Activated CD4-positive, alpha-beta T cell treated with anti-CD3 and anti-CD28 coated beads, Interleukin-2, amount 10 ng/mL, durations not matched to agents 24 days and 14 days (primary cell): ENCODE measurements at regions of chr14 and their contacts with region 1.

Region 1: GRCh38 chr14:99230208-99231151 is 41.5 kb downstream of the BCL11B start:
- DNase-seq: peak; percentile 95
- H3K4me3 Mint-ChIP-seq: peak overlapping the region; percentile 90
- H3K27ac Mint-ChIP-seq: peak overlapping the region; percentile 98
- H3K4me1 Mint-ChIP-seq: peaks cover 89% of the 10 kb centered on the region
- H3K27me3 Mint-ChIP-seq: no peaks in the 10 kb centered on the region

Region 2: DNA sequence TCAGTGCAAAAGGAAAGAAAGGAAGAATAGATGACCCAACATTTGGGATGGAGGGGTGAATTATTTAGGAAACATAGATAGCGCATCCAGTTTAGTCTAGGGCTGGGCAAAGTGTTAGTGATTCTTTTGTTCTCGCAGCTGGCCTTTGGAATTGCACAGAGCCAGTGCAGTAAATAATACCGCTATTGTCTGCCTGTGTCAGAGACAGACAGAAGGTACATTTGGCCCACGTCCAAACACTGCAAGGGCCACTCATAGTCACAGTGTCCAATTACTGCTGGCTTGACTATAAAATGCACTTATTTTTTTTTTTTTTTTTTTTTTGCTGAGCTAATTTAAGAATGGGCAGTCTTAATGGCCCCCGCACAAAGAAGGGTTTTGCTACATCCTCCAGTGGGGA is 597.1 kb before region 1 on chr14:
- intact Hi-C with region 1: no loop called
- DNase-seq: peak; percentile 30
- H3K4me3 Mint-ChIP-seq: no peak overlapping the region
- H3K27ac Mint-ChIP-seq: no peak overlapping the region
- H3K4me1 Mint-ChIP-seq: no peaks in the 10 kb centered on the region
- H3K27me3 Mint-ChIP-seq: no peaks in the 10 kb centered on the region

Region 3: DNA sequence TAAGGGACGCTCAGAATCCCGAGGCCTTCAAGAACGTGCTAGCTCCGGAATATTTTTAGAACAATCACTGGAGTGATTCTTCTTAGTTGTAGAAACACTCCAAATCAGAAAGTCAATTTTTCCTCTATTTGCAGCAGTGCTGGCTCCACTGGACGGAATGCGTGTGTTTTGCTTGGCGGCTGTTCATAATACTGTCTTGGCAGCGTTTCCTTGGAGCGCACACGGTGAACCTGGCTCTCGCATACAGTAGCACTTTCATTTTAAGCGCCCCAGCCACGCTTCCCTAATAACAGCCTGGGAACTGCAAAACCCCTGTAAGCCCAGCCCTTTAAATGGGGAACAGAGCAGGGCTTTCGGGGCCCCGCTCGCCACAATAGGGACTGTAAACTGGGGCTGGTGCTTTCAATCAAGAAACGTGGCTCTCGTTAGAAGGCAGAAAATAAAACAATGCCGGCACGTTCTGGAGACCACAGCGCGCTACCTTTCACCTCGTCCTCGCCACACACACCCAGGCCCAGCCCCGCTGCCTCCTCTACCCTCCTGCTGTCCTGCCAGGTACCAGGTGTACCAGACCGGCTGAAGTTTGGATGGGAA is 38.4 kb before region 1 on chr14:
- intact Hi-C with region 1: loop called (anchors 2 kb)
- DNase-seq: peak; percentile 80
- H3K4me3 Mint-ChIP-seq: peak overlapping the region; percentile 90
- H3K27ac Mint-ChIP-seq: peak overlapping the region; percentile 89
- H3K4me1 Mint-ChIP-seq: peaks cover 89% of the 10 kb centered on the region
- H3K27me3 Mint-ChIP-seq: no peaks in the 10 kb centered on the region

Region 4: DNA sequence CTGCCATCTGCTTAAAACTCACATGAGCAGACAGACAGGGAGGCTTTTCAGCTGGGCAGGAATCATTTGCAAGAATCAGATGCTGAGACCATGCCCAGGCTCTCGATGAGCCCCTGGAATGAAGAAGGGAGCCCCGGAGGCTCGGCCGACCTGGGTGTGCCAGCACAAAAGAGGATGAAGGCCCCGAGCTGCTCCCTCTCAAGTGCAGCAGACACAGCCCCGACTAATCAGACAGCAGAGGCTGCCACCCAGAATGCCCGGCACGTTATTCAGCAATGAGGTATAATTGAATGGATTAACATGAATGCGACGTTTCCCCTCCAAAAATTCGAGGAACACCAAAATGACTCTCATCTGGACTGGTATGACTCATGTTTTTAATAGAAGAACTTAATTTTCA is 17.4 kb before region 1 on chr14:
- intact Hi-C with region 1: loop called (anchors 2 kb)
- DNase-seq: no peak
- H3K4me3 Mint-ChIP-seq: peak overlapping the region; percentile 75
- H3K27ac Mint-ChIP-seq: peak overlapping the region; percentile 82
- H3K4me1 Mint-ChIP-seq: peaks cover 86% of the 10 kb centered on the region
- H3K27me3 Mint-ChIP-seq: no peaks in the 10 kb centered on the region

Region 5: DNA sequence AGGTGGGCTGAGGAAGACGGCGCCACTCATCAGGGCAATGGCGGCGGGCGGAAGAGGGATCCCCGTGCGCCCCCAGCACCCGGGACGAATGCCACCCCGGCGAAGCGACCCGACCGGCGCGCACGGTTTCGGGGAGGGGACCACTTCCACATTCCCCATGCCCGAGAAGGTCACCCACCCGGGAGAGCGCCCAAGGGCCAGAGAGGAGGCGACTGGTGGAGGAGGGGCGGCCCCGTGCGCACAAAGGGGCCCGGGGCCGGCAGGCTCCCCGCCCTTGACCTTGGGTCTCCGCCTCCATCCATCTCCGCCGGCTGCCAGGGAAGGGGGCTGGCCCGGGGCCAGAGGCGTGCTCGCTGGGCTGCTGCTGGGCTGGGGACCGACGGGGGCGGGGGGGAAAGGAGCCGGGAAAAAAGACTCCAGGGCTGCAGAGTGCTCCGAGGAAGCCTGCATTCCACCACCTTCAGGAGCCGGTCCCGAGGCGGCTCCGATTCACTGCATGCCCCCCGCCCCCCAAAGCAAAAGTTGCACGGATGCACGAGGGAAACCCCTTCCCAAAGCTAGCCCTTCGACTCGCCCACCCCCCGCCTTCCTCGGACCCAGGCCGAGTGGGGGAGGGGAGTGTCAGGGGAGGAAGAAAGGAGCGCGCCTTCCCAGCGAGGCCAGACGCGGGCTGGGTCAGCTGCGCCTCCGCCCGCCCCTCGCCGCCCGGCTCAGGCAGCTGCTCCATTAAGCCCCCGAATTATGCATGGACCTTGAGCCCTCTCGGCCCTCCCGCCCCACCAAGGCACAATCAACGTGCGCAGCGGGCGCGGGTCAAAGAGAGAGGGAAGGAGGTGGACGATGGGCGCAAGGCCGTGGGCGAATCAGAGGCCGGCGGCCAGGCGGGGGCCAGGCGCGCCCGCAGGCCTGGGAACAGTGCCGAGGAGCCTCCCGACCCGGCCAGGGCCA is 15.4 kb after region 1 on chr14:
- intact Hi-C with region 1: loop called (anchors 1 kb)
- DNase-seq: peak; percentile 80
- H3K4me3 Mint-ChIP-seq: peak overlapping the region; percentile 90
- H3K27ac Mint-ChIP-seq: peak overlapping the region; percentile 99
- H3K4me1 Mint-ChIP-seq: peaks cover 77% of the 10 kb centered on the region
- H3K27me3 Mint-ChIP-seq: no peaks in the 10 kb centered on the region

Region 6: DNA sequence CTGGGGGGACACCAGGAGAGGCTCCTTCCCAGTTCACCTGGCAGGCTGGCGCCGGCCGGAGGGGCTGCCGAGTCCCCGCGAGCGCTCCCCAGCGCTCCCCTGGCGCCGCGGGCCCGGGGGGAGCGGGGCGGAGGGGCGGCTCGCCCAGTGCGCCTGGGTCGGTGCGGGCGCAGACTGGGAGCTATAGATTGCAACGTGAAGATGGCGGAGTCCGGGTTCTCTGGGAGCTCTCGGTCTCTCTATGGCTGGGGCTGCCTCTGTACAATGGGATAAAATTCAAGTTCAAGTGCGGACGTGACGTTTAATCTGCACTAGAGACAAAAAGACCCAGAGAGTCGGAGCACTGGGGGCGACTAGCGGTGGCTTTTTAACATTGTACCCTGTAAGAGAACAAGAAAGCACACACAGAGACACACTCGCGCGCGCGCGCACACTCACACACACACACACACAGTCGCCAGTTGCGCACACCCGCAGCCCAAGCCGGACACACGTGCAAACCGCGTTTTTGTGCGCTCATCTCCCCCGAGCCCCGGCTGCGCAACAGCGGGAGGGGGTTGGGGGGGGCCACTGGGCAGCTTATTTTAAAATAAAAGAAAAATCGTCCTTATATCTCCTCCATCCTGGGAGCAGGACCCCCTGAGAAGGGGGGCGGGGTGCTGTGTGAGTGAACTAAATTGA is 41.6 kb after region 1 on chr14 and contains the start of gene BCL11B:
- intact Hi-C with region 1: loop called (anchors 1 kb)
- DNase-seq: peak; percentile 96
- H3K4me3 Mint-ChIP-seq: peak within 1 kb of the TSS; percentile 91
- H3K27ac Mint-ChIP-seq: peak within 1 kb of the TSS; percentile 95
- H3K4me1 Mint-ChIP-seq: peaks cover 42% of the 10 kb centered on the region
- H3K27me3 Mint-ChIP-seq: peaks cover 13% of the 10 kb centered on the region
- total RNA-seq, gene BCL11B: 48.2 and 48.5 TPM in 2 replicates